ENCODE measurements at regions of chr1 and their contacts with region 1.

Region 1: DNA sequence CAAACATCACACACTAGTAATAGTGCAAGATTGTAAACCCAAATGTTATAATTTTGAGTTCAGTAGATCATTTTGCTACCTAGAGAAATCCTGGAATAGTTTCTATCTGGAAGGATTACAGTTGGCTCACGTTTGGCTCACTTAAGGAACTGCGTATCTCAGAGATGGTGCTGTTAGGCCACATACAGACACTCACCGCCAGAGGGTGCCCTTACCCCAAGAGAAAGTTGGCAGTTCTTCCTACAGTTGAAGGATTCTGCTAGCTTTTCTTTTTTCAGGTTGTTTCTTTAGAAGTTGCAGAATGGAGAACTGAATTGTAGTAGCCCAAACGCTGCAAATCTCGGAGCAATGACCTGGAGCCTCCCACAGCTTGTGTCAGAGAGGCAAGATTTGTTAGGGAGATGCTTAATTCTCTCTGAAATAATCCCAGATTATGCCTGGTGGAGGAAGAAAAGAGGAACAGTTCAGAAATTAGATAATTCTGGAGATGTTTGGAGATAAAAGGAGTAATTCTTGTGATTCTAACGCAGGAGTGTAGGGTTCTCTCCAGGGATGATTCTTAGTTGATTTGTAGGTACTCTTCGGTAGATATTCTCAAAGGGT is 87.9 kb upstream of the PAPPA2 start:
- DNase-seq: peak; percentile 71
- H3K4me3 ChIP-seq: no peak overlapping the region
- H3K27ac ChIP-seq: no peak overlapping the region
- H3K4me1 ChIP-seq: no peaks in the 10 kb centered on the region
- CTCF ChIP-seq: peak; percentile 97

Region 2: DNA sequence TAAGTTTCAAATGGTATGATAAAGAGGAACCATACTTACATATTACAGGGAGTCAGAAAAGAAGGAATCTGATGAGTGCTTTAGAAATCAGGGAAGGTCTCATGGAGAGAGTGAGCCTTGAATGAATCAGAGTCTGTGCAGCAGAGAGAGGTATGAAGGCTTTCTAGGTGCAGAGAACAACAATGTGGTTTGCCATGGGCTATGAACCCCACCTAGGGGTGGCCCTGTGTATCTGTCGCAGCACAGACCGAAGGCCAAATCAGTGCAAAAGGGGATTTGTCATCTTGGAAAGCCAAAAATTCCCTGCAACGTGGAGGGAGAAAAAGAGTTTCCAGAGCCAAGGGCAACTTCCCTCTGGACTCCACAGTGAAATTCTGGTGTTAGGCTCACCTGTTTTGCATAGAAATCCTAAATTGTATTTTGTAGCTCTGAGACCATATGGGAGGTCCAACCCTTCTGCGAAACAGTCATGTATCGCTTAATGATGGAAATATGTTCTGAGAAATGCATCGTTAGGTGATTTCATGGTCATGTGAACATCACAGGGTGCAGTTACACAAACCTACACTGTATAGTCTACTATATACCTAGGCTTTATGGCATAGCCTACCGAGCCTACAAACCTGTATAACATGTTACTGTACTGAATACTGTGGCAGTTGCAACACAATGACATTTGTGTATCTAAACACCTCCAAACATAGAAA is 91.6 kb after region 1 on chr1:
- CTCF ChIA-PET with region 1: no interaction called
- POLR2A ChIA-PET with region 1: no interaction called
- intact Hi-C with region 1: loop called (anchors 5 kb)
- DNase-seq: peak; percentile 8
- H3K4me3 ChIP-seq: no peak overlapping the region
- H3K27ac ChIP-seq: no peak overlapping the region
- H3K4me1 ChIP-seq: no peaks in the 10 kb centered on the region
- CTCF ChIP-seq: peak; percentile 68

Region 3: GRCh38 chr1:176691251-176692228 is 316.5 kb after region 1 on chr1:
- CTCF ChIA-PET with region 1: no interaction called
- POLR2A ChIA-PET with region 1: no interaction called
- intact Hi-C with region 1: loop called (anchors 1 kb)
- DNase-seq: peak; percentile 65
- H3K4me3 ChIP-seq: no peak overlapping the region
- H3K27ac ChIP-seq: no peak overlapping the region
- H3K4me1 ChIP-seq: no peaks in the 10 kb centered on the region
- CTCF ChIP-seq: peak; percentile 86

Region 4: DNA sequence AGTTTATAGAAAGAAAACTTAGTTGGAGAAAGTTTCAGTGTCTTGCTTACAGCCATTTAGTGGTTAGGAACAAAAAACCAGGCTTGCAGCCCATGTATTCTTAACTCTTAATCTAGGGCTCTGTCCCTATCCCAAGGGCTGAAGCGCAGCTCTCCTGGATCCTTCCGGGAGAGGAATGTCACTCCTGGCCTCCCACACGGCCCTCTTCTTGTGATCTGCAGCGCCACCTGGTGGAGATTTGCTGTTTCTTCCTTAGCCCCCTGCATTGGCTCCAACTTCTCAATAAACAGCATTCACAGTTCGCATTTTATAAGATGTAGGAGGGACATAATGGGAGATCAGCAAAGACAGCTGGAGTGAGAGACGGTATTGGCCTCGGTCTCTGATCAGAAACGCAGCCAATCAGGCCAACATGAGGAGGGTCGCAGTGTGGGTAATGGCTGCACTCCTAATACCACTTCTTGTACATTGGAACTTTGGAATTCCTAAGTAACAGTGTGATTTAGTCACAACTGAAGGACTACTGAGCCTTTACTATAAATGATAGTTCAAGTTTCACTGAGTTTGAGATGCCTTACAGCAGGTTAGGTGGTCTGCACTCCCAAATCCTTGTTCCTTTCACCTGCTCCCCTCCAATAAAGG is 506.0 kb after region 1 on chr1:
- CTCF ChIA-PET with region 1: no interaction called
- POLR2A ChIA-PET with region 1: no interaction called
- intact Hi-C with region 1: loop called (anchors 10 kb)
- DNase-seq: peak; percentile 58
- H3K4me3 ChIP-seq: no peak overlapping the region
- H3K27ac ChIP-seq: no peak overlapping the region
- H3K4me1 ChIP-seq: no peaks in the 10 kb centered on the region
- CTCF ChIP-seq: peak; percentile 92

Measured in OCI-LY7 (cell line).